ENCODE measurements at regions of chr10 and their contacts with region 1.

Region 1: DNA sequence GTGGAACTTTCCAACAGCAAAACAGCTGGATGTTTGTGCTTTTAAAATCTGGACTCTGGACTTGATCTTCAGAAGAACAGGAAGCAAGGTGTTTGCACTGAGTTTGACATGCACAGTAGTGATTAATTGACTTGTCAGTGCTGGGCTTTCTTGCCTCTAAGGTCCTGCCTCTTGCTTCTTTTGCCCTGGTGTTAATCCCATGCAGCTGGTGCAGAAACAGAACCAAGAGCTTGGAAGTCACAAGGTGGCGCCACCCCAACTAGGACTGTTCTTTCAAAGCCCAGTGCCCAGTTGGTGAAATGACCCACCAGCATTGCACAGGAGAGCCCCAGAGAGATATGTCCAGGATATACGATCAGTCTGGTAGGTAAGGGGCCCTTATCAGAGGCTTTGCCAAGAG is 66.8 kb upstream of the SEPHS1 start:
- DNase-seq: peak in 3 of 4 experiments; percentile 24 to 64 (median 42)
- ATAC-seq: peak; percentile 43
- H3K4me3 ChIP-seq: no peak overlapping the region
- H3K27ac ChIP-seq: peak overlapping the region; percentile 91; the same call in 2 of the 3 replicates
- H3K4me1 ChIP-seq: peaks cover 26 to 33% of the 10 kb centered on the region in 2 experiments
- H3K27me3 ChIP-seq: no peaks in the 10 kb centered on the region
- CTCF ChIP-seq: peak; percentile 40 to 51 (median 43); a peak in 4 of 6 replicates
- EP300 ChIP-seq: no peak
- POLR2A ChIP-seq: no peak
- RAD21 ChIP-seq: peak in 1 of 2 experiments; percentile 55; a peak in 2 of 4 replicates

Region 2: DNA sequence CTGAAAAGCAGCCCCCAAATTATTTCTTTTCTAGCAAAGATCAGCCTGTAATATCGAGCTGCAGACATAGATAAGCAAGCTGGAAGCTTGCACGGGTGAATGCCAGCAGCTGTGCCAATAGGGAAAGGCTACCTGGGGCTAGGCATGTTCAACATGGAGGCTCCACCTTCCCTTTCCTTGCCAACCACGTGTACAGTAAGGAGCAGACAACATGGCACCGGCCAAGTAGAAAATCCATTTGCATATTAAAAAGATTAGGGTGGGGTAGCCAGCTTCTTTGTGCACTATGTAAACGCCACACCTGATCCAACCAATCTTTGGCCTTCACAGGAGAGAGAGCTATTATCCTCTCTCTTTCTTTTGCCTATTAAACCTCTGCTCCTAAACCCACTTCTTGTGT is 10.1 kb before region 1 on chr10:
- CTCF ChIA-PET with region 1: no interaction called
- POLR2A ChIA-PET with region 1: interaction called, 8 read pairs
- in situ Hi-C with region 1: no loop called
- intact Hi-C with region 1: loop called (anchors 1 kb)
- DNase-seq: no peak
- ATAC-seq: no peak
- H3K4me3 ChIP-seq: no peak overlapping the region
- H3K27ac ChIP-seq: peak overlapping the region; percentile 79
- H3K4me1 ChIP-seq: peaks cover 13 to 25% of the 10 kb centered on the region in 2 experiments; a peak in 4 of 5 replicates
- H3K27me3 ChIP-seq: no peaks in the 10 kb centered on the region
- CTCF ChIP-seq: no peak
- EP300 ChIP-seq: no peak
- POLR2A ChIP-seq: no peak
- RAD21 ChIP-seq: no peak

Region 3: GRCh38 chr10:13440185-13441061 is 25.5 kb after region 1 on chr10:
- CTCF ChIA-PET with region 1: no interaction called
- POLR2A ChIA-PET with region 1: interaction called, 5 read pairs
- in situ Hi-C with region 1: no loop called
- intact Hi-C with region 1: loop called (anchors 1 kb)
- DNase-seq: peak; percentile 77 to 85 (median 84)
- ATAC-seq: peak; percentile 97
- H3K4me3 ChIP-seq: 0 out of 2 replicates have a peak overlapping the region, but pooled peaks have one; percentile 23
- H3K27ac ChIP-seq: no peak overlapping the region
- H3K4me1 ChIP-seq: peaks cover 13 to 19% of the 10 kb centered on the region in 2 experiments; a peak in 4 of 5 replicates
- H3K27me3 ChIP-seq: no peaks in the 10 kb centered on the region
- CTCF ChIP-seq: peak; percentile 89 to 94 (median 93)
- EP300 ChIP-seq: no peak
- POLR2A ChIP-seq: no peak
- RAD21 ChIP-seq: peak; percentile 84 to 87